Caco-2 (cell line): ENCODE measurements at regions of chr3 and their contacts with region 1.

Region 1: DNA sequence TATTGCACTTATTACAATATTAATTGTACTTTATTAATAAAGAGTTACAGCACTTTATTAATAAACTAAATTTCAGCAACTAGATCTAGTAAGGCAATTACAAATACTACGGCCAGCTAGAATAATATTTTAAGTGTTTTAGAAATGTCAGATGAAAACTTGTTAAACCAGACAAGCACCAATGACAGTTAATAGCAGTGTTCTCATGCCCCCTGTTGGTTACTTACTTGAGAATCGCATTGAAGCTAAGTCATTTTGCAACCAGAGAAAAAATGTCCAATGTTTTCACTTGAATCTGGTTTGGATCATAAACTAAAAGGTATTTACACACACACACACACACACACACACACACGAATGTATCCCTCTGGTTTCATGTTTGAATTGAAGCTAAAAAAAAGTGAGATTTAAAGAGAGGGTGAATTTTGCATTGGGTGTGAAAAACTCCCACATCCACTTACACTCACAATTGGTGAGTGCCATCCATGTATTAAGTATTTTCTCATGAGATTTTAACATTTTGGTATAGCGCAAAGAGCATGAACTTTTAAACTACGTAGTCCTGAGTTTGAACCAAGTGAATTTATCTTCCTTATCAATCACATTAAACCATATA is 347.7 kb downstream of the ZBBX start:
- DNase-seq: peak in 1 of 2 experiments; percentile 40
- H3K4me3 ChIP-seq: no peak overlapping the region
- H3K4me3 Mint-ChIP-seq: no peak overlapping the region
- H3K27ac Mint-ChIP-seq: no peak overlapping the region
- H3K4me1 ChIP-seq: no peaks in the 10 kb centered on the region
- H3K4me1 Mint-ChIP-seq: no peaks in the 10 kb centered on the region
- H3K27me3 ChIP-seq: no peaks in the 10 kb centered on the region
- H3K27me3 Mint-ChIP-seq: peaks cover 3% of the 10 kb centered on the region
- CTCF ChIP-seq: peak; percentile 45 to 59

Region 2: DNA sequence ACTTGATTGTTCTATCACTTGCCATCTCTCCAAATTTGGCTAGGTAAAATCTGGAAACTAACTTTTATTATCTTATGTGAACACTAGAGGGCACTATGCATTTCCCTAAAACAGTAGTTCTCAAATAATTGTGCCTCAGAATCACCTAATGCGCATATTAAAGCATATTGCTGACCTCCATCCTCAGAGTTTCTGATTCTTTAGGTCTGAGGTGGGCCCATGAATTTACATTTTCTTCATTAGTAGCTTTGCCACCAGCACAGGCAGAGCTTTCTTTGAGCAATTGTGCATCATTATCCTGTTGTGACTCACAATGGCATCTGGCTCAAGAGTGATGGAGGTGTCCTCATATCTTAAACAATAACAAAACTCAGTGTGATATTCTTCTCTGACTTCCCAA is 1177.7 kb before region 1 on chr3:
- CTCF ChIA-PET with region 1: no interaction called
- POLR2A ChIA-PET with region 1: no interaction called
- intact Hi-C with region 1: loop called (anchors 1 kb)
- DNase-seq: no peak
- H3K4me3 ChIP-seq: no peak overlapping the region
- H3K4me3 Mint-ChIP-seq: no peak overlapping the region
- H3K27ac Mint-ChIP-seq: no peak overlapping the region
- H3K4me1 ChIP-seq: no peaks in the 10 kb centered on the region
- H3K4me1 Mint-ChIP-seq: no peaks in the 10 kb centered on the region
- H3K27me3 ChIP-seq: no peaks in the 10 kb centered on the region
- H3K27me3 Mint-ChIP-seq: no peaks in the 10 kb centered on the region
- CTCF ChIP-seq: peak; percentile 44 to 48

Region 3: GRCh38 chr3:166554023-166554422 is 478.3 kb before region 1 on chr3:
- CTCF ChIA-PET with region 1: no interaction called
- POLR2A ChIA-PET with region 1: no interaction called
- intact Hi-C with region 1: loop called (anchors 2 kb)
- DNase-seq: no peak
- H3K4me3 ChIP-seq: no peak overlapping the region
- H3K4me3 Mint-ChIP-seq: no peak overlapping the region
- H3K27ac Mint-ChIP-seq: no peak overlapping the region
- H3K4me1 ChIP-seq: no peaks in the 10 kb centered on the region
- H3K4me1 Mint-ChIP-seq: no peaks in the 10 kb centered on the region
- H3K27me3 ChIP-seq: no peaks in the 10 kb centered on the region
- H3K27me3 Mint-ChIP-seq: no peaks in the 10 kb centered on the region
- CTCF ChIP-seq: no peak

Region 4: GRCh38 chr3:166837535-166837934 is 194.8 kb before region 1 on chr3:
- CTCF ChIA-PET with region 1: interaction called, 5 read pairs
- POLR2A ChIA-PET with region 1: no interaction called
- intact Hi-C with region 1: loop called (anchors 1 kb)
- DNase-seq: peak in 1 of 2 experiments; percentile 31
- H3K4me3 ChIP-seq: no peak overlapping the region
- H3K4me3 Mint-ChIP-seq: no peak overlapping the region
- H3K27ac Mint-ChIP-seq: no peak overlapping the region
- H3K4me1 ChIP-seq: no peaks in the 10 kb centered on the region
- H3K4me1 Mint-ChIP-seq: no peaks in the 10 kb centered on the region
- H3K27me3 ChIP-seq: no peaks in the 10 kb centered on the region
- H3K27me3 Mint-ChIP-seq: no peaks in the 10 kb centered on the region
- CTCF ChIP-seq: peak; percentile 39 to 43

Region 5: DNA sequence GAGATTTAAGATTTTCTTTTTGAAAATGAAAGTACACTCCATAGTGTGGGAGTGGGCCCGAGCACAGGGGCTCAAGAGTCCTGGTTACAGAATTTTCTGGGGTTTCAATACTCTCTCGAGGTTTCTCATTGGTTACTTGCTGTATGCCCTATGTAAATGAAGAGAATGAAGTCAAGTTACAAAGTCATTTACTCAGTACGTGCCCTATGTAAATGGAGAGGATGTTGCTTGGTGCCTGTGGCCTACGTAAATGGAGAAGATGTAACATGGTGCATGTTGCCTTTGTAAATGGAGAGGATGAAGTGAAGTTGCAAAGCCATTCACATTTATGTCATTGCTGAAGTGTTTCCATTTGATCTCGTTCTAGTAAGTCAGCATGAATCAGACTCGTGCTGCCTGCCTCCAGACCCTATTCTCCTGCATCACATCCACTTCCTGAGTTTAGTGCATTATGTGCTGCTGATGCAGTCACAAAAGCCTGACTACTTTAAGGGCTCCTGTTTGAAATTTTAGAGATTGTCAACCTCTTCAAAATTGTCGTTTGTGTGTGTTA is 45.8 kb after region 1 on chr3:
- CTCF ChIA-PET with region 1: no interaction called
- POLR2A ChIA-PET with region 1: no interaction called
- intact Hi-C with region 1: no loop called
- DNase-seq: no peak
- H3K4me3 ChIP-seq: no peak overlapping the region
- H3K4me3 Mint-ChIP-seq: no peak overlapping the region
- H3K27ac Mint-ChIP-seq: no peak overlapping the region
- H3K4me1 ChIP-seq: no peaks in the 10 kb centered on the region
- H3K4me1 Mint-ChIP-seq: no peaks in the 10 kb centered on the region
- H3K27me3 ChIP-seq: no peaks in the 10 kb centered on the region
- H3K27me3 Mint-ChIP-seq: peaks cover 3% of the 10 kb centered on the region
- CTCF ChIP-seq: no peak